GM12878 (cell line): ENCODE measurements at regions of chr10 and their contacts with region 1.

Region 1: DNA sequence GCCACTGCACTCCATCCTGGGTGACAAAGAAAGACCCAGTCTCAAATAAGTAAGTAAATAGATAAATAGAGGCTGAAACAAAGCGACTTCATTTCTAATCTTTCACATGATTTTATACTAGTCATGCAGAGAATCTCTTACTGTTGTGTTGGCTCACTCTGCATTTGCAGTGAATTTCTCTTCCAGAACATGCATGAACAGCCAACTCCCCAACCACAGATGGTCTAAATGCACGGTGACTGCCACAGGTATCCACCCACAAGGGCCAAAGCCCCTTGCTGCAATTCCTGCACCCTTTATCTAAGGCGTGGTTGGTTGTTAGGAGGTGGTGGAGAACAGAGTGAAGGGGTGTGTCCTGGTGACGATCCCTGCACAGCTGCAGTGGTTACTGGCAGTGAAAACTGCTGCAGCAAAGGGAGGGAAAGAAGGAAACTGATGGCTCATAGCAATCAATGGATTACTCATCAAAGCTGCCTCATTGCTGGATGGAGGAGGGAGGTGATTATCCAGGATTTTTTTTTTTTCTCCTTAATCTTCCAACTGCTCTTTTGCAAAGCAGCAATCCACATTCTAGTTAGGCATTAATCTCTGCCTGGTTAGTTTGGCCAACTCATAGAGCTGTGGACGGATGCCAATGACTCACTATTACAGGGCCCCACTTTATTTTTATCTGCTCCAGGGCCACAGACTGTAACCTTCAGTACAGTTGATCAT is 50.6 kb downstream of the PRTFDC1 start:
- DNase-seq: peak; percentile 43
- ATAC-seq: peak; percentile 66
- H3K4me3 ChIP-seq: peak overlapping the region; percentile 28; the same call in 1 of the 2 replicates
- H3K27ac ChIP-seq: peak overlapping the region; percentile 59
- H3K4me1 ChIP-seq: peaks cover 20% of the 10 kb centered on the region
- H3K27me3 ChIP-seq: no peaks in the 10 kb centered on the region
- CTCF ChIP-seq: no peak
- EP300 ChIP-seq: 0 out of 4 replicates have a peak, but pooled peaks of 1 of the 2 experiments have one; percentile 31
- POLR2A ChIP-seq: no peak
- RAD21 ChIP-seq: no peak

Region 2: DNA sequence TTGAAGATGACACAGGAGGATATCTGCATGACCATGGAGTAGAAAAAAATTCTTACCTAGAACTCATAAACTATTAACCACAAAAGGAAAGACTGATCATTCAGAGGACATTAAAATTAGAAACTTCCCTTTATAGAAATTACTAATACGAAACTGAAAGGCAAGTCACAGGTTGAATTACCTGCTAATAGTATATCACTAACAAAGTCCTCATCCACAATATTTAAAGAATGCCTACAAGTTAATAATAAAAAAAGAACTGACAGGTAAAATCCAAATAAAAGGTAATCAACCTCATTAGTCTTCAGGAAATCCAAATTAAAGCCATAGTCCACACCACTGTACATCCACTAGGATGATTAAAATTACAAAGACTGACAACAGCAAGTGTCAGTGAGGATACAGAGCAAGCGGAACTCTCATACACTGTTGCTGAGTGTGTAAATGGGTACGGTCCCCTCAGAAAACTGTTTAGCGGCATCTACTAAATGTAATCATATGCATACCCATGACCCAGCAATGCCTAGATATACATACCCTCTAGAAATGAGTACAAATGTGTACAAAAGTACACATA is 249.4 kb before region 1 on chr10:
- CTCF ChIA-PET with region 1: interaction called, 4 read pairs
- POLR2A ChIA-PET with region 1: interaction called, 5 read pairs
- RAD21 ChIA-PET with region 1: interaction called, 8 read pairs
- SMC1A ChIA-PET with region 1: interaction called, 13 read pairs
- in situ Hi-C with region 1: loop called (anchors 5 kb)
- intact Hi-C with region 1: no loop called
- DNase-seq: peak; percentile 62
- ATAC-seq: peak; percentile 93
- H3K4me3 ChIP-seq: peak overlapping the region; percentile 46
- H3K27ac ChIP-seq: peak overlapping the region; percentile 76
- H3K4me1 ChIP-seq: peaks cover 15% of the 10 kb centered on the region
- H3K27me3 ChIP-seq: no peaks in the 10 kb centered on the region
- CTCF ChIP-seq: no peak
- EP300 ChIP-seq: peak; percentile 42 to 82; a peak in 3 of 4 replicates
- POLR2A ChIP-seq: no peak
- RAD21 ChIP-seq: no peak

Region 3: GRCh38 chr10:24826019-24826418 is 75.8 kb before region 1 on chr10:
- CTCF ChIA-PET with region 1: no interaction called
- POLR2A ChIA-PET with region 1: no interaction called
- RAD21 ChIA-PET with region 1: interaction called, 9 read pairs
- SMC1A ChIA-PET with region 1: interaction called, 8 read pairs
- in situ Hi-C with region 1: no loop called
- intact Hi-C with region 1: loop called (anchors 5 kb)
- DNase-seq: no peak
- ATAC-seq: peak; percentile 60
- H3K4me3 ChIP-seq: no peak overlapping the region
- H3K27ac ChIP-seq: no peak overlapping the region
- H3K4me1 ChIP-seq: no peaks in the 10 kb centered on the region; the same call in 1 of the 2 replicates
- H3K27me3 ChIP-seq: no peaks in the 10 kb centered on the region
- CTCF ChIP-seq: no peak
- EP300 ChIP-seq: no peak
- POLR2A ChIP-seq: no peak
- RAD21 ChIP-seq: no peak

Region 4: GRCh38 chr10:24887855-24888231 is 14.0 kb before region 1 on chr10:
- CTCF ChIA-PET with region 1: interaction called, 11 read pairs
- POLR2A ChIA-PET with region 1: interaction called, 19 read pairs
- RAD21 ChIA-PET with region 1: interaction called, 14 read pairs
- SMC1A ChIA-PET with region 1: interaction called, 37 read pairs
- in situ Hi-C with region 1: no loop called
- intact Hi-C with region 1: no loop called
- DNase-seq: no peak
- ATAC-seq: peak; percentile 22
- H3K4me3 ChIP-seq: no peak overlapping the region
- H3K27ac ChIP-seq: peak overlapping the region; percentile 16
- H3K4me1 ChIP-seq: peaks cover 3% of the 10 kb centered on the region; the same call in 1 of the 2 replicates
- H3K27me3 ChIP-seq: no peaks in the 10 kb centered on the region
- CTCF ChIP-seq: no peak
- EP300 ChIP-seq: no peak; a peak in 1 of 4 replicates
- POLR2A ChIP-seq: no peak
- RAD21 ChIP-seq: no peak

Region 5: DNA sequence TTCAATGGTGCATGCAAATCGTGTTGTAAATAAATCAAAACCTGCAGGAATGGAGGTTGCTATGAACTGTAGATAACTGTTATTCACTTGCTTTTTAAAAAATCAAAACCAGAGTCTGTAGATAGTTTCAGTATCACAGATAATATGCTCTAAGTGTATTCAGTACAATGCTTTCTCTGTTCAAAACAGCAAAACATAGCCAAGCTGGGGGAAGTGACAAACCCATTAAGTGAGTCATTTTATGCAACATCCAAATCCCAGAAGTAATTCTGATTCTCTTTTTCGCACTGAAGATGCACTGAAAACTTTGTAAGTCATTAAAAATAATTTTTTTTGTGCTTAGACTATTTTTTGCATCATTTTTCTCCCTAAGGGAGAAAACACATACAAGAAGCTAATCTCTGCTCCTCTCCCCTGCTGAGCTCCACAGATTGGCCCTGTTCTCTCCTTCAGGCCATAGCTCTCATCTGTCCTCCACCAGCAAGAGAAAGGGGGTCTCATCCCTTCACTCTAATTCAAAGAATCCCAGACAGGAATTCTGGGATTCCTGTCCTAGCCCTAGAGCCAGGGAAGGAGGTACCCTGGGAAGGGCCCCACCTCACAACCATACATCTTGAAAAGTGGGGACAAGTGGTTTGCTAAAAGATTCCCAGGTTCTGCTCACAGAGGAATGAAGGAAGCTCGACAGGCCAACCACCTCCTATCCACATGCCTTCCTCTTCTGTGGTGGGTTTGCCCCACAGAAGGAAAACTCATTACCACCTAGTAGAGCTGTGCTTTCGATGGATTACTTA is 45.7 kb after region 1 on chr10:
- CTCF ChIA-PET with region 1: interaction called, 6 read pairs
- POLR2A ChIA-PET with region 1: interaction called, 7 read pairs
- RAD21 ChIA-PET with region 1: interaction called, 45 read pairs
- SMC1A ChIA-PET with region 1: interaction called, 39 read pairs
- in situ Hi-C with region 1: no loop called
- intact Hi-C with region 1: loop called (anchors 1 kb)
- DNase-seq: peak; percentile 51
- ATAC-seq: peak; percentile 79
- H3K4me3 ChIP-seq: no peak overlapping the region
- H3K27ac ChIP-seq: no peak overlapping the region
- H3K4me1 ChIP-seq: peaks cover 3% of the 10 kb centered on the region; the same call in 1 of the 2 replicates
- H3K27me3 ChIP-seq: no peaks in the 10 kb centered on the region
- CTCF ChIP-seq: no peak
- EP300 ChIP-seq: peak; percentile 82 to 87; a peak in 3 of 4 replicates
- POLR2A ChIP-seq: no peak
- RAD21 ChIP-seq: no peak

Region 6: DNA sequence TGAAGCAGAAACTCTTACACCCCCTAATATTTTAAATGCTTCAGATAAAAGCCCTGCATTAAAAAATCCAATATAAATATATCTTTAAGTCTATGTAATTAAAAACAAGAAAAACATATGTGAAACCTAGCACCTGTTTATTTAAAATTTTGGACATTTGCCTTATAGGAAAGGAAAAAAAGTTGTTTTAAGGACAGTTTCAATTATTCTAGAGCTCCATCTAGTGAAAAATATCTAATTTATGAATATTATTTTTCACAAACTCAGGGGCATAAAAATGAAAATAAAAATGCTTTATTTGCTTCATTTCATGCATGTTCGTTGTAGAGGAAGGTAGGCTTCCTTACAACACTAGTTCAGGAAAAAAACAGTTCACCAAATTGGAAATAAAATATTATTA is 88.0 kb after region 1 on chr10:
- CTCF ChIA-PET with region 1: interaction called, 5 read pairs
- POLR2A ChIA-PET with region 1: interaction called, 3 read pairs
- RAD21 ChIA-PET with region 1: interaction called, 10 read pairs
- SMC1A ChIA-PET with region 1: interaction called, 14 read pairs
- in situ Hi-C with region 1: no loop called
- intact Hi-C with region 1: loop called (anchors 5 kb)
- DNase-seq: no peak
- ATAC-seq: no peak
- H3K4me3 ChIP-seq: no peak overlapping the region
- H3K27ac ChIP-seq: no peak overlapping the region
- H3K4me1 ChIP-seq: no peaks in the 10 kb centered on the region
- H3K27me3 ChIP-seq: no peaks in the 10 kb centered on the region
- CTCF ChIP-seq: no peak; a peak in 1 of 6 replicates
- EP300 ChIP-seq: no peak
- POLR2A ChIP-seq: no peak
- RAD21 ChIP-seq: peak; percentile 8; the same call in 1 of the 2 replicates

Region 7: GRCh38 chr10:25232204-25232603 is 330.4 kb after region 1 on chr10:
- CTCF ChIA-PET with region 1: no interaction called
- POLR2A ChIA-PET with region 1: no interaction called
- RAD21 ChIA-PET with region 1: no interaction called
- SMC1A ChIA-PET with region 1: no interaction called
- in situ Hi-C with region 1: no loop called
- intact Hi-C with region 1: no loop called
- DNase-seq: no peak
- ATAC-seq: no peak
- H3K4me3 ChIP-seq: no peak overlapping the region
- H3K27ac ChIP-seq: no peak overlapping the region
- H3K4me1 ChIP-seq: no peaks in the 10 kb centered on the region
- H3K27me3 ChIP-seq: no peaks in the 10 kb centered on the region
- CTCF ChIP-seq: no peak
- EP300 ChIP-seq: no peak
- POLR2A ChIP-seq: no peak
- RAD21 ChIP-seq: no peak